ENCODE measurements at regions of chr7 and their contacts with region 1.

Region 1: GRCh38 chr7:116809636-116810266 is 52.6 kb upstream of the CAPZA2 start:
- DNase-seq: peak; percentile 62 to 83
- H3K4me3 ChIP-seq: peak overlapping the region; percentile 13
- H3K4me3 Mint-ChIP-seq: peak overlapping the region; percentile 75
- H3K27ac Mint-ChIP-seq: peak overlapping the region; percentile 89
- H3K4me1 ChIP-seq: peaks cover 66% of the 10 kb centered on the region
- H3K4me1 Mint-ChIP-seq: peaks cover 45% of the 10 kb centered on the region
- H3K27me3 ChIP-seq: no peaks in the 10 kb centered on the region
- H3K27me3 Mint-ChIP-seq: no peaks in the 10 kb centered on the region
- CTCF ChIP-seq: peak; percentile 42 to 66

Region 2: DNA sequence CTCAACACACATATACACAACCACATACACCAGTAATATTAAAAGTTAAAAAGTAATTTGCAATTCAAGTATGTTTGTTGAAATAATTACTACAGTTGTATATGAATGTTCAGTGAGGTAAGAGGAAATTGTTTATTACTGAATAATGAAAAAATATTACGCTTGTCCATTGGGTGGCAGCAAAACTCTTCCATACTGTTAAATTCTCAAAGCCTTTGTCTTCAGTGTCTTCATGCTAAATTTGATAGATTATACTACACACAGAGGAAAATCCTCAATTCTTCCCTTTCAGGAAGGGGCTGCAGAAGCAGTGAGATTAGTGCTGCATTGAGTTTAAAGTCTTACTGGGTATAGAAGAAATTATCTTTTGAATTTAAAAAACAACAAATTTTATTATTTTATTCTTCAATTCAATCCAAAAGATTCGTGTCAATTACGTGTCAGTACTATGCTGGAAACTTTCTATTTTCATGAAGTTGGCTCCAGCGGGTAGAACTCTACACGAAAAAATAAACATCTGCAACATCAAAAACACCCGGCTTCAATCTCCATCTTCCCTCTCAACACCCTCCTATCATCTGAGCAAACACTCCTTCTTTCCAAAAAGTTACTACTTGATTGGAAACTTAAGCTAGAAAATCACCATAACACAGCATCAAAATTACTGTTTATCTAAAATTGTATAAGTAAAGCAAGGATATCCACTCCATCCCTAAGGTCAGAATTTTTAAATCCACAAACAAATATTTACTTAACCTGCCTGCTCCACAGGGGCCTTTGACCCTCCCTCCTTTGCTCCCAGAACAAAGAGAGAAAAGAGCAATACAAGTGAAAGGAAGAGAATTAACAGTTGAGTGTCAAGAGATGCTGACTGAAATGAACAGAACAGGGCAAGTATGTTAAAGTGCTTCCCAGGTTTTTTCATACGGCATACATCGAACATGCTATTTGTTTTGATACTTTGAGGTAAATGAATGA is 636.4 kb before region 1 on chr7:
- CTCF ChIA-PET with region 1: no interaction called
- POLR2A ChIA-PET with region 1: no interaction called
- intact Hi-C with region 1: loop called (anchors 1 kb)
- DNase-seq: peak in 1 of 2 experiments; percentile 63
- H3K4me3 ChIP-seq: no peak overlapping the region
- H3K4me3 Mint-ChIP-seq: peak overlapping the region; percentile 6
- H3K27ac Mint-ChIP-seq: no peak overlapping the region
- H3K4me1 ChIP-seq: peaks cover 43% of the 10 kb centered on the region
- H3K4me1 Mint-ChIP-seq: peaks cover 37% of the 10 kb centered on the region
- H3K27me3 ChIP-seq: no peaks in the 10 kb centered on the region
- H3K27me3 Mint-ChIP-seq: no peaks in the 10 kb centered on the region
- CTCF ChIP-seq: peak; percentile 38 to 63

Region 3: GRCh38 chr7:116271963-116272839 is 537.5 kb before region 1 on chr7:
- CTCF ChIA-PET with region 1: no interaction called
- POLR2A ChIA-PET with region 1: no interaction called
- intact Hi-C with region 1: loop called (anchors 5 kb)
- DNase-seq: no peak
- H3K4me3 ChIP-seq: no peak overlapping the region
- H3K4me3 Mint-ChIP-seq: no peak overlapping the region
- H3K27ac Mint-ChIP-seq: no peak overlapping the region
- H3K4me1 ChIP-seq: peaks cover 39% of the 10 kb centered on the region
- H3K4me1 Mint-ChIP-seq: peaks cover 23% of the 10 kb centered on the region
- H3K27me3 ChIP-seq: no peaks in the 10 kb centered on the region
- H3K27me3 Mint-ChIP-seq: no peaks in the 10 kb centered on the region
- CTCF ChIP-seq: no peak

Region 4: GRCh38 chr7:116588641-116589594 is 220.8 kb before region 1 on chr7:
- CTCF ChIA-PET with region 1: interaction called, 16 read pairs
- POLR2A ChIA-PET with region 1: no interaction called
- intact Hi-C with region 1: loop called (anchors 1 kb)
- DNase-seq: peak in 1 of 2 experiments; percentile 57
- H3K4me3 ChIP-seq: no peak overlapping the region
- H3K4me3 Mint-ChIP-seq: no peak overlapping the region
- H3K27ac Mint-ChIP-seq: peak overlapping the region; percentile 30
- H3K4me1 ChIP-seq: peaks cover 17% of the 10 kb centered on the region; the same call in 1 of the 2 replicates
- H3K4me1 Mint-ChIP-seq: peaks cover 22% of the 10 kb centered on the region
- H3K27me3 ChIP-seq: no peaks in the 10 kb centered on the region
- H3K27me3 Mint-ChIP-seq: no peaks in the 10 kb centered on the region
- CTCF ChIP-seq: peak; percentile 44 to 69

Region 5: DNA sequence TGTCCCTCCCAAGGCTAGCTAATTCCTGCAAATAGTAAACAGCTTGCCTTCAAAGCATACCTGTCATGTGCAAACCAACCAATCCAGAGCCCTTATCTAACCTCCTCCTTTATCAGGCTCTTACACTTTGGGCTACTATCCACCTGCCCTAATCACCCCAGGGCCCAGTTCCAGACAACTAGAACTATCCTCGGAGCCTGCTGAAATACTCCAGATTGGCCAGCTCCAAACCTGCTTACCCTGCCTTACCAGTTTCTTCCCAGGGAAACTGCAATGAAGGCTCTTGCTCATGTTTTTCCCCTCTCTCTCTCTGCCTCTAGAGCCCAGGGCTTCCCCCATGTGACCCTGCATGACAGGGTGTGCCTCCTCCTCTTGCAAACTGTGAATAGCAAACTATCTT is 28.8 kb before region 1 on chr7:
- CTCF ChIA-PET with region 1: interaction called, 5 read pairs
- POLR2A ChIA-PET with region 1: no interaction called
- intact Hi-C with region 1: loop called (anchors 1 kb)
- DNase-seq: peak; percentile 94 to 95
- H3K4me3 ChIP-seq: no peak overlapping the region
- H3K4me3 Mint-ChIP-seq: peak overlapping the region; percentile 42
- H3K27ac Mint-ChIP-seq: peak overlapping the region; percentile 92
- H3K4me1 ChIP-seq: peaks cover 69% of the 10 kb centered on the region
- H3K4me1 Mint-ChIP-seq: peaks cover 26% of the 10 kb centered on the region
- H3K27me3 ChIP-seq: no peaks in the 10 kb centered on the region
- H3K27me3 Mint-ChIP-seq: no peaks in the 10 kb centered on the region
- CTCF ChIP-seq: no peak

Region 6: DNA sequence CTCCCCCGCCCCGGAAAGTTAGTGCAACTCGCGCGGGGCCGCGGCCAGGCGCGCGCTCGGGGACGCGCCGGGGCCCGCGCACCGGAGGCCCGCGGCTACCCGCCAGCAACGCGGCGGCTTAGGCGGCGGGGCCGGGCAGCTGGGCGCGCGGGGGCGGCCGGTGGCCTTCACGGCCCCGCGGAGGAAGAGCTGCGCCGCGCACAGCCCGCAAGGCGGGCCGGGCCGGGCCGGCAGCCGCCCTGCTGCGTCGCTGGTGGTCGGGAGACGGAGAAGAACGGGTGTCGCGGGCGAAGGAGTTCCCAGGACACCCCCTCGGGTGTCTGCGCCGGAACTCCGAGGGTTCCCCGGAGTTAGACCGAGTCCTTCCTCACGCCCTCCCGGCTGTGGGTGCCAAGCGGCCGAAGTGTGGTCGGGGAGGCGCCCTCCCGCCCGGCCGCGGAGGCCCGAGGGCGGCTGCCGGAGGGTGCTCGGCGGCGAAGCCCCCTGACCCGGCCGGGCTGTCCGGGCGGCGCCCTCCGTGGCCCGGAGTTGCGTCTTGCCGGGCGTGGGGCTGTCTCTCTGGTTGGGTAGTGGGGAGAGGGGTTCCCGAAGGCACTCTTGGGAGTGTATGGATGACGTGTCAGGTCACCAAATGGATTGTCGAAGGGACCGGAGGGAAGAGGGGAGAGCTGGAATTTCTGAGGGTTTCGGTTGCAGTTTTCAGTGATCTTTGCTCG is 144.1 kb after region 1 on chr7:
- CTCF ChIA-PET with region 1: no interaction called
- POLR2A ChIA-PET with region 1: no interaction called
- intact Hi-C with region 1: loop called (anchors 2 kb)
- DNase-seq: peak; percentile 81 to 87
- H3K4me3 ChIP-seq: peak overlapping the region; percentile 91
- H3K4me3 Mint-ChIP-seq: peak overlapping the region; percentile 94
- H3K27ac Mint-ChIP-seq: peak overlapping the region; percentile 94
- H3K4me1 ChIP-seq: peaks cover 12% of the 10 kb centered on the region
- H3K4me1 Mint-ChIP-seq: peaks cover 18% of the 10 kb centered on the region
- H3K27me3 ChIP-seq: no peaks in the 10 kb centered on the region
- H3K27me3 Mint-ChIP-seq: no peaks in the 10 kb centered on the region
- CTCF ChIP-seq: no peak

Measured in Caco-2 (cell line).